AG04450 (cell line): ENCODE measurements at regions of chr15 and their contacts with region 1.

Region 1: DNA sequence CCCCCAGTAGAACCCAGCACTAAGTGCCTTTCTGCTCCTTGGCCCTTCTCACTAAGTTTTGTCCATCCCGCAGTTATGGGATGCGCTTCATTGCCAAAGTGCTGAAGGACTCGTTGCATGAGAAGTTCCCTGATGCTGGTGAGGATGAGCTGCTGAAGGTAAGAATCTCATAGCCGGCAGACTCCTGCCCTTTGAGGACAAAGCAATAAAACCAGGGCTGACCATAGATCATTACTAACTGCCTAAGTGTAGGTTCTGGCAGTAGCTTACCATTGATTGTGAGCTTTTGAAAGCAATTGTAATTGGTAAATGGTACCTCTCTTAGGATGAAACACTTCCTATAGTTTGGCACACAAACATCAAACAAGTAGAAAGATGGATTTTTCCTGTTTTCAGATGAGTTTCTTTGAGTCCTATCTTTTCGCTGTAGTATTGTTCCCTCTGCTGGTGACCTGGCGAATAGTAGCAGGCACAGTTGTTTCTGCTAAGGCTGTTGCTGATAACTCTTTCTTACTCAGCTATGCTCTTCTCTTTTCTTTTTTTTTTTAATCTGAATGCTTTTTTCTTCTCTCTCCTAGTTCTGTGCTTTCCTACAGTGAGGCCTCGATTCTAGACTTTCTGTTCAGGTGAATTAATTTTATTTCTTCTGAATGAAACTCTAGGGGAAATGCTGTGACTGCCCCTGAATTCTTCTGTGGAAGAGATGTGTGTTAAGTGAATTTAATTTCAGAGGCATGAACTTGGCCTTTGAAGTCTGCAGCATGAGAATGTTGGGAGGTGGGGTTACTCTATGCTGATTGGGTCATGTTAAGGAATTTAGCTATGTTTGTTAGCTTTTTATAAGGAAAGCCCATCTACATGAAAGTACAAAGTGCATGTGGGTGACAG is 47.4 kb upstream of the CRTC3 start:
- DNase-seq: peak; percentile 32
- H3K4me3 ChIP-seq: no peak overlapping the region
- H3K27ac ChIP-seq: no peak overlapping the region
- H3K27me3 ChIP-seq: no peaks in the 10 kb centered on the region
- CTCF ChIP-seq: peak; percentile 88

Region 2: GRCh38 chr15:90086868-90087268 is 395.5 kb before region 1 on chr15:
- CTCF ChIA-PET with region 1: no interaction called
- POLR2A ChIA-PET with region 1: no interaction called
- DNase-seq: no peak
- H3K4me3 ChIP-seq: no peak overlapping the region
- H3K27ac ChIP-seq: no peak overlapping the region
- H3K27me3 ChIP-seq: no peaks in the 10 kb centered on the region
- CTCF ChIP-seq: peak; percentile 70

Region 3: GRCh38 chr15:90291679-90292356 is 190.6 kb before region 1 on chr15:
- CTCF ChIA-PET with region 1: interaction called, 34 read pairs
- POLR2A ChIA-PET with region 1: no interaction called
- DNase-seq: no peak
- H3K4me3 ChIP-seq: no peak overlapping the region
- H3K27ac ChIP-seq: no peak overlapping the region
- H3K27me3 ChIP-seq: peaks cover 2% of the 10 kb centered on the region
- CTCF ChIP-seq: no peak

Region 4: DNA sequence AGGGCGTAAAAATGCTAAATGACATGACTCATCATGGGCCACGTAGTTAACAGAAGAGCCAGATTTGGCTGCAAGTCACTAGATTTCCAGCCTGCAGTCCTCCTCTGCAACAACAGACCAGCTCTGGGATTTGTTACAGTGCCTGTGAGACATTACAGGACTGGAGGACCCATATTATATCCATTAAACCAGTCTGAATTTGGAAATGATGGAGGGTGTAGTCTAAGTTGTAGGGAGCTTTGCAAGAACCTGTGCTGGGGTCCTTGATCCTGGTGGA is 119.5 kb before region 1 on chr15:
- CTCF ChIA-PET with region 1: interaction called, 38 read pairs
- POLR2A ChIA-PET with region 1: no interaction called
- DNase-seq: peak; percentile 53
- H3K4me3 ChIP-seq: no peak overlapping the region
- H3K27ac ChIP-seq: peak overlapping the region; percentile 53
- H3K27me3 ChIP-seq: no peaks in the 10 kb centered on the region
- CTCF ChIP-seq: no peak

Region 5: GRCh38 chr15:90425726-90426346 is 56.5 kb before region 1 on chr15:
- CTCF ChIA-PET with region 1: interaction called, 12 read pairs
- POLR2A ChIA-PET with region 1: no interaction called
- DNase-seq: no peak
- H3K4me3 ChIP-seq: no peak overlapping the region
- H3K27ac ChIP-seq: no peak overlapping the region
- H3K27me3 ChIP-seq: no peaks in the 10 kb centered on the region
- CTCF ChIP-seq: no peak

Region 6: DNA sequence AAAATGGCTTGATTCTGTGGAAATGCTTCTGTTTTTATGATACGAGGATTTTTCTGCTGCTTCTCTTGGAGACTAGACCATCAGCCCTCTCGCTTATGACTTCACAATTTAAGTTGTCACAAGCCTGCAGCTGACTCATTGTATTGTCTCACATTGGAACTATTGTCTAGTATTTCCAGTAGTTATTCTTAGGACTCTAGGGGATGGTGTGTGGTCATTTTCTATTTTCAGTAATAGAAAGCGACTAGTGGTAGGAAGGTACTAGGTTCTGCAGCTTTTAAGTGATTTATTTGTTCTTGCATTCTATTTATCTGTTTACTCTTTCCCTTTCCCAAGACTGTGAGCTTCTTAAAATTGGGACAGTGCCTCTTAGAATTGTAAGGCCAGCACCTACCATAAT is 19.0 kb before region 1 on chr15:
- CTCF ChIA-PET with region 1: interaction called, 37 read pairs
- POLR2A ChIA-PET with region 1: no interaction called
- DNase-seq: no peak
- H3K4me3 ChIP-seq: no peak overlapping the region
- H3K27ac ChIP-seq: no peak overlapping the region
- H3K27me3 ChIP-seq: no peaks in the 10 kb centered on the region
- CTCF ChIP-seq: 0 out of 2 replicates have a peak, but pooled peaks have one; percentile 2

Region 7: GRCh38 chr15:90497912-90498311 is 15.5 kb after region 1 on chr15:
- CTCF ChIA-PET with region 1: interaction called, 12 read pairs
- POLR2A ChIA-PET with region 1: no interaction called
- DNase-seq: no peak
- H3K4me3 ChIP-seq: no peak overlapping the region
- H3K27ac ChIP-seq: no peak overlapping the region
- H3K27me3 ChIP-seq: no peaks in the 10 kb centered on the region
- CTCF ChIP-seq: no peak

Region 8: GRCh38 chr15:90667073-90667754 is 184.8 kb after region 1 on chr15:
- CTCF ChIA-PET with region 1: no interaction called
- POLR2A ChIA-PET with region 1: no interaction called
- DNase-seq: no peak
- H3K4me3 ChIP-seq: no peak overlapping the region
- H3K27ac ChIP-seq: no peak overlapping the region
- H3K27me3 ChIP-seq: no peaks in the 10 kb centered on the region
- CTCF ChIP-seq: no peak